ENCODE measurements at regions of chrX and their contacts with region 1.

Region 1: DNA sequence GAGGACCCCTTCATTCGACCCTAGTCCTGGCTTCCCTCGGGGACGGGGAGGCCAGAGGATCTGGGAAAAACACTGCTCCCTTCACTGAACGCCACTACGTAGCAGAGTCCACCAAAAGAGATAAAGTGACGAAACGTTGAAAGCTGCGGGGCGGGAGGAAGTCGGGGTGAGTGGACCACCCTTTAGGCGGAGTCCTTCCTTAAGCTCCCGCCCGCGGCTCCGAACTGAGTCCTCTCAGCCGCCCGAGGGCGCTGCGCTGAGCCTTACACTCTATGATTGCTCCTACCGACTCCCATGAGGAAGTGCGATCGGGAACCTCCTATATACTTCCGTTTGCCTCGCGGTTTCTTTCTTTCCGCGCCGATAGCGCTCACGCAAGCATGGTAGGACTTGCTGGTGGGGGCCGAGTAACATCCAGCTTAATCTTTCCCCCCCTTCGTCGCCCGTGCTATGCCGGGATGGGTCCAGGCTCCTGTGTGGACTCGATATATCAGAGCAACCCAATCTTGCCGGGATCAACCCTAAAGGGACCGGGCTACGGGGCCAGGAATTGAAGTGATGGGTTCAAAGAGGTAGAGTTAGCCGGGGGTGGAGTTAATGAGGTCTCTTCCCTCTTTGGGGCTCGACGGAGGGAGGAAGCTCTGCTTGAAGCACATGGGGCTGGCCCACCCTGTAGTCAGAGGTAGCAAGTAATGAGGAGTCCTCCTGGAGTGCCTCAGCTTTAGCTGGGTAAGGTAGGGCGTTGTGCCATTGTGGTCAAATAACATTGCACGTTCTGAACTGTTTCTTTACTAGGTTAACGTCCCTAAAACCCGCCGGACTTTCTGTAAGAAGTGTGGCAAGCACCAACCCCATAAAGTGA is at the start of gene RPL36A:
- DNase-seq: peak; percentile 92 to 94 (median 94)
- H3K4me3 ChIP-seq: peak within 1 kb of the TSS; percentile 38 to 85 (median 71)
- H3K27ac ChIP-seq: peak within 1 kb of the TSS; percentile 75 to 77
- H3K4me1 ChIP-seq: peaks cover 7 to 26% (median 16%) of the 10 kb centered on the region in 4 experiments
- H3K27me3 ChIP-seq: peaks cover 0 to 4% (median 0%) of the 10 kb centered on the region in 5 experiments

Region 2: GRCh38 chrX:101407748-101408531 is 17.0 kb after region 1 on chrX and contains the starts of genes GLA and HNRNPH2:
- CTCF ChIA-PET with region 1: interaction called, 10 read pairs
- POLR2A ChIA-PET with region 1: interaction called, 5 read pairs
- DNase-seq: peak; percentile 97 to 99 (median 99)
- H3K4me3 ChIP-seq: peak within 1 kb of the TSS; percentile 68 to 96 (median 79)
- H3K27ac ChIP-seq: peak within 1 kb of the TSS; percentile 96 to 98
- H3K4me1 ChIP-seq: peaks cover 0 to 28% (median 12%) of the 10 kb centered on the region in 4 experiments
- H3K27me3 ChIP-seq: no peaks in the 10 kb centered on the region